Testis (tissue), 5 donors: ENCODE measurements at regions of chr10 and their contacts with region 1.

Region 1: DNA sequence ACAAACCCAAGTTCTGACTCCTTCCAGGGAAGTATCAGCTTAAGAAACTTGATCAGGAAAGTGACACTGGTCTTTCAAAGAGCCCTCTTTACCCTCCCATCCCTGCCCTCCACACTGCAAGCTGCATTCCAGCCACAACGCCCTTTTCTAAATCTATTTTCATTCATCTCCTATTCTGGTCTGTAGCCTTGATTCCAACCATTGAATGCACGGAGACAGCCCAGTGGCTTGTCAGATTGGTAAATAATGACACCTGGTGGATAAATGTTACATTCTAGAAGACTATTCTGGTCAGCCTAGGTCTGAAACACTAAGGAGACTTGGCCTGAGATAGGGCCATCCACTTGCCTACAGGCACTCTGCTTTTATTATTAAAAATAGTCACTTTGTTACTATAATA is 20.9 kb downstream of the MORN4 start:
- DNase-seq: no peak
- H3K4me3 ChIP-seq: no peak overlapping the region
- H3K27ac ChIP-seq: no peak overlapping the region
- H3K4me1 ChIP-seq: no peaks in the 10 kb centered on the region
- H3K27me3 ChIP-seq: no peaks in the 10 kb centered on the region
- CTCF ChIP-seq: peak in 2 of 3 experiments; percentile 36 to 48
- POLR2A ChIP-seq: no peak

Region 2: DNA sequence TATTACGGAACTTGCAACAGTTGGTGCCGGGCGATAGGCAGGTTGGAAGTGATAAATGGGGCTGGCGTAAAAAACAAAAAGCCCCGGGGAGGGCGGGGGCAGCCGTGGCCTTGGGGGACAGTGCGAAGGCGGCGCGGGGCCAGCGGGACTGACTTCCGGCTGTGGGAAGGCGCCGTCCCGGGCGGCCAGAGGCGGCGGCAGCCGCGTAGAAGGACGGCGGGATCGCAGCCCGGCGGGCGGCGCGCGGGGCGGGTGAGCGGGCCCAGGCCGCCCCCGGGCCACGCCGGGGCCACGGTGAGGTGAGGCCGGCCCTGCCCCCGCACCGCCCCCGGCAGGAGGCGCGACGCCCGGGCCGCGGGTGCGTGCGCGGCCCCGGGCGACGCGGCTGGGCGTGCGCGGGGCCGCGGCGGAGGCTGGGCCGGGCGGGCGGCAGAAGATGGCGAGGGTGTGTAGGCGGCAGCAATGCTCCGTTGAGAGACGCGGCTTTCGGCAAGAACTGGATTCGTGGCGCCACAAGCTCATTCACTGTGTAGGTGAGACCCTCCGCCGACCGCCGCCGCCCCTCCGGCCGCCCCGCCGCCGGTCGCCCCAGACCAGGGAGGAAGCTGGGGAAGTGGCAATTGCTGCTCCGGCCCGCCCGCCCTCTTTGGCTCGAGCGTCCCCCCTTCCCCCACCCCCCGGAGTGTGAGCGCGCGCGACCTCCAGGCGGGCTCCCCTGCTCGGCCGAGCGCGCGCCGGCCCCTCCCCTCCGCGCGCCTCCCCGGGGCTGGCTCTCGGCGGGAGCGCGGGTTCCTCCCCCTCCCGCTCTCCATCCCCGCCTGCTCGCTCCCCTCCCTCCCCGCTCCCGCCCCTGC is 780.3 kb before region 1 on chr10 and contains the start of gene LCOR:
- intact Hi-C with region 1: no loop called
- DNase-seq: peak; percentile 86
- H3K4me3 ChIP-seq: peak within 1 kb of the TSS; percentile 93 to 95
- H3K27ac ChIP-seq: peak within 1 kb of the TSS; percentile 91 to 96
- H3K4me1 ChIP-seq: peaks cover 23% of the 10 kb centered on the region
- H3K27me3 ChIP-seq: no peaks in the 10 kb centered on the region
- CTCF ChIP-seq: peak in 1 of 3 experiments; percentile 16
- POLR2A ChIP-seq: no peak
- total RNA-seq, gene LCOR: 40.0 to 68.3 TPM

Region 3: GRCh38 chr10:97531486-97531885 is 80.9 kb before region 1 on chr10:
- intact Hi-C with region 1: no loop called
- DNase-seq: no peak
- H3K4me3 ChIP-seq: no peak overlapping the region
- H3K27ac ChIP-seq: no peak overlapping the region
- H3K4me1 ChIP-seq: no peaks in the 10 kb centered on the region
- H3K27me3 ChIP-seq: no peaks in the 10 kb centered on the region
- CTCF ChIP-seq: no peak
- POLR2A ChIP-seq: no peak

Region 4: GRCh38 chr10:97574374-97575119 is 37.8 kb before region 1 on chr10:
- intact Hi-C with region 1: loop called (anchors 5 kb)
- DNase-seq: peak; percentile 48
- H3K4me3 ChIP-seq: no peak overlapping the region
- H3K27ac ChIP-seq: no peak overlapping the region
- H3K4me1 ChIP-seq: peaks cover 3% of the 10 kb centered on the region
- H3K27me3 ChIP-seq: no peaks in the 10 kb centered on the region
- CTCF ChIP-seq: no peak
- POLR2A ChIP-seq: no peak

Region 5: GRCh38 chr10:97701438-97702069 is 89.2 kb after region 1 on chr10:
- intact Hi-C with region 1: no loop called
- DNase-seq: peak; percentile 70
- H3K4me3 ChIP-seq: no peak overlapping the region
- H3K27ac ChIP-seq: no peak overlapping the region
- H3K4me1 ChIP-seq: no peaks in the 10 kb centered on the region
- H3K27me3 ChIP-seq: no peaks in the 10 kb centered on the region
- CTCF ChIP-seq: peak; percentile 59 to 75 (median 65)
- POLR2A ChIP-seq: no peak